A549 (cell line): ENCODE measurements at regions of chr6 and their contacts with region 1.

Region 1: GRCh38 chr6:71406871-71407860 is 118.6 kb downstream of the OGFRL1 start:
- DNase-seq: peak in 1 of 2 experiments; percentile 80
- ATAC-seq: peak; percentile 62 to 77; a peak in 5 of 6 replicates
- H3K4me3 ChIP-seq: peak overlapping the region; percentile 12; the same call in 2 of the 3 replicates
- H3K27ac ChIP-seq: peak overlapping the region; percentile 86 to 98
- H3K4me1 ChIP-seq: peaks cover 65% of the 10 kb centered on the region
- CTCF ChIP-seq: no peak
- EP300 ChIP-seq: peak in 1 of 2 experiments; percentile 56; a peak in 2 of 5 replicates
- POLR2A ChIP-seq: no peak
- RAD21 ChIP-seq: no peak

Region 2: GRCh38 chr6:71364889-71365552 is 42.1 kb before region 1 on chr6:
- CTCF ChIA-PET with region 1: no interaction called
- POLR2A ChIA-PET with region 1: no interaction called
- DNase-seq: no peak
- ATAC-seq: no peak
- H3K4me3 ChIP-seq: no peak overlapping the region
- H3K27ac ChIP-seq: no peak overlapping the region
- H3K4me1 ChIP-seq: peaks cover 33% of the 10 kb centered on the region
- CTCF ChIP-seq: no peak
- EP300 ChIP-seq: no peak
- POLR2A ChIP-seq: no peak
- RAD21 ChIP-seq: no peak

Region 3: DNA sequence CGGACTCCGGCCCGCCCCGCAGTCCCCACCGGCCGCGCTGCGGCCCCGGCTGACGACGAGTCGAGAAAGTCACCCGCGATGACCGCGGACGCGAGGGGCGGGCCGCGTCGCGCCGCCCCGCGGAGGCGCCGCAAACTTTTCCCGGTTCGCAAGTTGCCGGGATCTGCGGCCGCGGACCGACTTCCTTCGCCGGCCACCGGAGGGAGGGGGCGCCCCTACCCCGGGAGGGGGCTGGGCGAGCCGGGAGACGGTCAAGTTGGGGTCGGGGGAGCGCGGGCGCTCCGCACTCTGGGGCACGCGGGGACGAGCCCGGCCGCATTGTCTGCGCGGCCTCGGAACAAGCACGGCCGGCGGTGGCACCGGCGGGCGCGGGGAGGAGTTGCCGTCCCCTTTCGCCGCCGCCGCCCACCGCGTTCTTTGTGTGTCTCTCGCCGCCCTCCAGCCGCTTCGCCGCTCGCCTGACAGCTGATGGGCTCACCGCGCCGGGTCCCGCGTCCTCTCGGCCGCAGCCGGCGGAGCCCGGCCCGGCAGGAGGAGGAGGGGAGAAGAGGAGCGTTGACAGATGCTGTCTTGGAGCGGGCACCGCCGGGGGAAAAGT is 13.0 kb after region 1 on chr6:
- CTCF ChIA-PET with region 1: interaction called, 10 read pairs
- POLR2A ChIA-PET with region 1: interaction called, 8 read pairs
- DNase-seq: no peak
- ATAC-seq: peak; percentile 70 to 75
- H3K4me3 ChIP-seq: peak overlapping the region; percentile 91
- H3K27ac ChIP-seq: peak overlapping the region; percentile 85 to 96
- H3K4me1 ChIP-seq: peaks cover 25% of the 10 kb centered on the region
- CTCF ChIP-seq: peak; percentile 17; the same call in 1 of the 3 replicates
- EP300 ChIP-seq: no peak
- POLR2A ChIP-seq: no peak
- RAD21 ChIP-seq: 0 out of 5 replicates have a peak, but pooled peaks of 1 of the 2 experiments have one; percentile 17